MCF 10A (cell line): ENCODE measurements at regions of chr14 and their contacts with region 1.

Region 1: GRCh38 chr14:94439453-94440057 is 13.0 kb downstream of the SERPINA11 start:
- DNase-seq: no peak
- H3K4me3 Mint-ChIP-seq: no peak overlapping the region
- H3K27ac Mint-ChIP-seq: no peak overlapping the region
- H3K4me1 Mint-ChIP-seq: no peaks in the 10 kb centered on the region
- H3K27me3 Mint-ChIP-seq: no peaks in the 10 kb centered on the region
- CTCF ChIP-seq: no peak

Region 2: DNA sequence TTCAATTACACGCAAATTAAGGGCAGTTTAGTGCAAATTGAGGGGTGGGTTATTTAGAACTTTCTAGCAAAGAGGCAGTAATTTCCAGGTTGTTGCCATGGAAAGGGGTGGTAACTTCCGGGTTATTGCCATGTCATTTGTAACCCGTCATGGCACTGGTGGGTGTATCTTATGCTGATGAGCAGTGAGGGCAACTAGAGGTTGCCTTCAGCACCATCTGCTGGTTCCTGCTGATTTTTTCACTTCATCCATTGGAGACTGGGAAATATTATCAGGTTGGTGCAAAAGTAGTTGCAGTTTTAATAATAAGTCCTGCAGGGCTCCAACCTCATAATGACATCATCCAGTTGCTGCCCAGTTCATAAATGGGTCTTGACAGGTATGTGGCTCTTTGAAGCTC is 97.3 kb after region 1 on chr14:
- CTCF ChIA-PET with region 1: no interaction called
- POLR2A ChIA-PET with region 1: no interaction called
- intact Hi-C with region 1: loop called (anchors 5 kb)
- DNase-seq: peak; percentile 58
- H3K4me3 Mint-ChIP-seq: no peak overlapping the region
- H3K27ac Mint-ChIP-seq: no peak overlapping the region
- H3K4me1 Mint-ChIP-seq: peaks cover 2% of the 10 kb centered on the region
- H3K27me3 Mint-ChIP-seq: no peaks in the 10 kb centered on the region
- CTCF ChIP-seq: no peak